ENCODE measurements at regions of chr12 and their contacts with region 1.

Region 1: GRCh38 chr12:113048716-113049127 is 7.8 kb upstream of the DTX1 start:
- DNase-seq: peak; percentile 84
- ATAC-seq: peak; percentile 55
- H3K4me3 ChIP-seq: no peak overlapping the region
- H3K4me3 Mint-ChIP-seq: peak overlapping the region; percentile 37
- H3K27ac ChIP-seq: peak overlapping the region; percentile 39 to 53
- H3K27ac Mint-ChIP-seq: peak overlapping the region; percentile 43
- H3K4me1 ChIP-seq: peaks cover 48 to 50% of the 10 kb centered on the region in 2 donors
- H3K4me1 Mint-ChIP-seq: peaks cover 47% of the 10 kb centered on the region
- H3K27me3 ChIP-seq: no peaks in the 10 kb centered on the region
- H3K27me3 Mint-ChIP-seq: peaks cover 5% of the 10 kb centered on the region
- CTCF ChIP-seq: peak; percentile 85

Region 2: GRCh38 chr12:112705037-112705661 is 343.6 kb before region 1 on chr12:
- CTCF ChIA-PET with region 1: no interaction called
- POLR2A ChIA-PET with region 1: no interaction called
- intact Hi-C with region 1: no loop called
- DNase-seq: no peak
- ATAC-seq: no peak
- H3K4me3 ChIP-seq: no peak overlapping the region
- H3K4me3 Mint-ChIP-seq: no peak overlapping the region
- H3K27ac ChIP-seq: no peak overlapping the region
- H3K27ac Mint-ChIP-seq: no peak overlapping the region
- H3K4me1 ChIP-seq: no peaks in the 10 kb centered on the region
- H3K4me1 Mint-ChIP-seq: no peaks in the 10 kb centered on the region
- H3K27me3 ChIP-seq: peaks cover 0 to 3% (median 1%) of the 10 kb centered on the region in 4 experiments
- H3K27me3 Mint-ChIP-seq: peaks cover 33% of the 10 kb centered on the region
- CTCF ChIP-seq: no peak

Region 3: GRCh38 chr12:112881602-112882001 is 167.1 kb before region 1 on chr12:
- CTCF ChIA-PET with region 1: no interaction called
- POLR2A ChIA-PET with region 1: no interaction called
- intact Hi-C with region 1: no loop called
- DNase-seq: no peak
- ATAC-seq: no peak
- H3K4me3 ChIP-seq: no peak overlapping the region
- H3K4me3 Mint-ChIP-seq: no peak overlapping the region
- H3K27ac ChIP-seq: no peak overlapping the region
- H3K27ac Mint-ChIP-seq: no peak overlapping the region
- H3K4me1 ChIP-seq: no peaks in the 10 kb centered on the region
- H3K4me1 Mint-ChIP-seq: no peaks in the 10 kb centered on the region
- H3K27me3 ChIP-seq: peaks cover 0 to 16% (median 8%) of the 10 kb centered on the region in 4 experiments
- H3K27me3 Mint-ChIP-seq: peaks cover 43% of the 10 kb centered on the region
- CTCF ChIP-seq: no peak

Region 4: DNA sequence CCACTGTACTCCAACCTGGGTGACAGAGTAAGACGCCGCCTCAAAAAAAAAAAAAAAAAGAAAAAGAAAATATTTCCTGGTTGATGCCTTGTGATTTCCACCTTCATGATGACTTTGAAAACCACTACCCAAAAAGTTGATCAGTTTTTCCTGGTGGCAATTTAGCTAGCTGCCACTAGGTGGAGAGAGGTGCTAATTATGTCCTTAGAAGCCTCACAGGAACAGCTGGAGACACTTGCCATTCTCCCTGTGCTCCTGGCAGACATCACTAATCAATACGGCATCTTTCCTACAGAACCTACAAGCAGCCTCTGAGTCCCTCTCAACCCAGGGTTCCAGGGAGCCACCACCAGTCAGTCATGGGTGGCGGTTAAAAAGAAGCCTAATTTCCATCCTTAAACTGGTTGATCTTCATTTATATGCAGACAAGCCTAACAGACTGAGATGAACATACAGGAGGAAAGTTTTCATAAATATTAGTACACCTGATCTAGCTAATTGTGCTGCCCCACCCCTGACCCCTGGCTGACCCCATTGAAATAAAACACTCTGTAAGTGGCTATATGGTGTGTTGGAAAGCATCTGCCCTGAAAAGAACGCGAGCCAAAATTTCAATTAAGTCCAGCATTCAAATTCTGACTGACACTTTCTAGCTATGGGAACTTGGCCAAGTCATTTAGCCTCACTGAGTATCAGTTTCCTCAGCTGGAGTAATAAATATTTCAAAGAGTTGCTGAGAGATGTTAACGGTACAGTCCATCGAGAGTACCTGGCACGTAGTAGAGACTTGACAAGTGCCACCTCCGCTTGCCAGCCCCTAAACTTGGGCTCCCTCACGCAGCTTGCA is 148.2 kb before region 1 on chr12:
- CTCF ChIA-PET with region 1: interaction called, 10 read pairs
- POLR2A ChIA-PET with region 1: no interaction called
- intact Hi-C with region 1: no loop called
- DNase-seq: peak; percentile 70
- ATAC-seq: no peak
- H3K4me3 ChIP-seq: no peak overlapping the region
- H3K4me3 Mint-ChIP-seq: no peak overlapping the region
- H3K27ac ChIP-seq: no peak overlapping the region
- H3K27ac Mint-ChIP-seq: peak overlapping the region; percentile 56
- H3K4me1 ChIP-seq: peaks cover 8 to 31% of the 10 kb centered on the region in 2 donors
- H3K4me1 Mint-ChIP-seq: peaks cover 38% of the 10 kb centered on the region
- H3K27me3 ChIP-seq: peaks cover 0 to 3% (median 0%) of the 10 kb centered on the region in 4 experiments
- H3K27me3 Mint-ChIP-seq: peaks cover 19% of the 10 kb centered on the region
- CTCF ChIP-seq: peak; percentile 85

Region 5: DNA sequence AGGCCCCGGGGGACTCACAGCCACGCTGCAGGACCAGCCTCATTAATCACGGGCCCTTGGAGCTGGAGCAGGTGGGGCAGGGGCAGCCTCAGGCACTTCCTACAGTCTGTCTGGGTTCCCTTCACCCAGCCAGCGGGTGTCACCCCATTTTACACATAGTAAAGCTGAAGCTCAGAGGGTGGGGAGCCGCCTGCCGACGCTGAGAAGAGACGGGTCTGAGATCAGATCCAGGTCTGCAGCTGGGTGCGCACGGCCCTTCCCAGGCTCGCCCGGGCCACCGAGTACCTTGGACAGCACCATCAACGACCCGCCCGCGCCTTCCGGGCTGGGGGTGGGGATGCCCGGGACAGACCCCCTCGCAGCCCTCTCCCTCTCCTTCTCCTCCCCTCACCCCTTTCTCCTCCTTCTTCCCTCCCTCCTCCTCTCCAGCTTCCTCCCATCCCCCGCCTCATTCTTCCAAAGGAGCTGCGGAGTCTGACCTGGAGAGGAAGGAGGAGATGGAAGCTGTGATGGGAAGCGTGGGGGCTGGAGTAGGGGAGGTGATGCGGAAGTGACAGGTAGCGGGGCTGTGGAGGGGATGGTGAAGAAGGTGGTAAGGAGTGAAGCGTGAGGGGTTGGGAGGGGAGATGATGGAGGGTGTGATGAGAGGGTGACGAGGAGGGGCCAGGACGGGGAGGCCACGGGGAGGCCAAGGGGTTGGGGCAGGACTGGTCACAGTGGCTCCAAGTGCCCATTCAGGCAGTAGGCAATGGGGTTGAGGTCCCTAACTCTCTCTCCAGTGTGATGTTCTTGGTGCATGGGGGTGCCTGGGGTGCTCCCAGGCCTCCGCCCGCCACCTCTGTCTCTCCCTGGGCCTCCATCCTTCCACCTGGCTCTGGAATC is 16.6 kb after region 1 on chr12:
- CTCF ChIA-PET with region 1: interaction called, 72 read pairs
- POLR2A ChIA-PET with region 1: interaction called, 7 read pairs
- intact Hi-C with region 1: no loop called
- DNase-seq: peak; percentile 68
- ATAC-seq: peak; percentile 32
- H3K4me3 ChIP-seq: peak overlapping the region in 2 of 5 experiments; percentile 7 to 13
- H3K4me3 Mint-ChIP-seq: peak overlapping the region; percentile 65
- H3K27ac ChIP-seq: peak overlapping the region; percentile 25 to 84
- H3K27ac Mint-ChIP-seq: peak overlapping the region; percentile 67
- H3K4me1 ChIP-seq: peaks cover 100% of the 10 kb centered on the region in 2 donors
- H3K4me1 Mint-ChIP-seq: peaks cover 80% of the 10 kb centered on the region
- H3K27me3 ChIP-seq: no peaks in the 10 kb centered on the region
- H3K27me3 Mint-ChIP-seq: no peaks in the 10 kb centered on the region
- CTCF ChIP-seq: no peak

Region 6: DNA sequence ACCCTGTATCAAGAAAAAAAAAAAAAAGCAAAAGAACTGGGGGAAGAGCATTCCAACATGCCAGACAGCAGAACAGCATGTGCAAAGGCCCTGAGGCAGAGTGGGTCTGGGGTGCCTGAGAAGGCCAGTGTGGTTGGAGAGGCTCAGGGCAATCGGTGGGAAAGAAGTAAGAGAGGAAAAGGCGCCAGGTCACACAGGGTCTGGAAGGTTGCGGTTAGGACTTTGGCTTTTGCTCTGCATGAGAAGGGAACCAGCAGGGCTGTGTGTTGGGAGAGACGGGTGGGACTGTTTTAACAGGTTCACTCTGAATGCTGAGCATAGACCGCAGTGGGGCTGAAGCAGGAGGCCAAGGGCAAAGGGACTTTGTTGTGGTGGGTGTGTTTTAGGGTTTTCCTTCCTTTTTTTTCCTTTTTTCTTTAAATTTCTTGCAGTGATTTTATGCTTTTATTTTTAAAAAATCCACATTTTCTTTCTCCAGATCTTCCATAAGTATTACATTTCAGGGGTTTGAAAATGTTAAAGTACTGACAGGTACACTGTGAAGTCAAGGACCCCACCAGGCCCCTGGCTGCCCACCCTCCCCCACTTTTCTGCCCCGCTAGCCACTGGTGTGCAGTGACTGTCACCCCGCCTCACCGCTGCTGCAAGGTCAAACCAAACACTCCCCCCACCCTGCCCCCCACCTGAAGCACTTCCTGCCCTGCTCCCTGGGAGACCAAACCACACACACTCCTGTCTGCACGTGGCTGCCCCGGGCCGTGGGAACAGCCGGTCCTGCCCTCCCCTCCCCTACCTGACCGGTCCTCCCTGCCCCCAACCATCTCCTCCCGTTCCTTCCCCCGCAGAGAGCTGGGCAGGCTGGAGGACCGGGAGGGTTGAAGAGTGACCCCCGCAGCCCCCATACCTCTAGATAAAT is 37.8 kb after region 1 on chr12:
- CTCF ChIA-PET with region 1: interaction called, 359 read pairs
- POLR2A ChIA-PET with region 1: interaction called, 7 read pairs
- intact Hi-C with region 1: no loop called
- DNase-seq: peak; percentile 58
- ATAC-seq: peak; percentile 21
- H3K4me3 ChIP-seq: peak overlapping the region in 3 of 5 experiments; percentile 5 to 20 (median 16)
- H3K4me3 Mint-ChIP-seq: peak overlapping the region; percentile 74
- H3K27ac ChIP-seq: peak overlapping the region; percentile 76 to 85
- H3K27ac Mint-ChIP-seq: peak overlapping the region; percentile 86
- H3K4me1 ChIP-seq: peaks cover 97 to 98% of the 10 kb centered on the region in 2 donors
- H3K4me1 Mint-ChIP-seq: peaks cover 85% of the 10 kb centered on the region
- H3K27me3 ChIP-seq: no peaks in the 10 kb centered on the region
- H3K27me3 Mint-ChIP-seq: no peaks in the 10 kb centered on the region
- CTCF ChIP-seq: no peak

Region 7: GRCh38 chr12:113098446-113098896 is 49.7 kb after region 1 on chr12:
- CTCF ChIA-PET with region 1: interaction called, 359 read pairs
- POLR2A ChIA-PET with region 1: interaction called, 4 read pairs
- intact Hi-C with region 1: loop called (anchors 1 kb)
- DNase-seq: peak; percentile 82
- ATAC-seq: peak; percentile 87
- H3K4me3 ChIP-seq: no peak overlapping the region
- H3K4me3 Mint-ChIP-seq: no peak overlapping the region
- H3K27ac ChIP-seq: peak overlapping the region in 1 of 2 donors; percentile 15
- H3K27ac Mint-ChIP-seq: peak overlapping the region; percentile 73
- H3K4me1 ChIP-seq: peaks cover 9 to 20% of the 10 kb centered on the region in 2 donors
- H3K4me1 Mint-ChIP-seq: peaks cover 18% of the 10 kb centered on the region
- H3K27me3 ChIP-seq: peaks cover 0 to under 1% (median 0%) of the 10 kb centered on the region in 4 experiments
- H3K27me3 Mint-ChIP-seq: no peaks in the 10 kb centered on the region
- CTCF ChIP-seq: peak; percentile 95

Region 8: GRCh38 chr12:113152835-113153814 is 104.4 kb after region 1 on chr12:
- CTCF ChIA-PET with region 1: interaction called, 61 read pairs
- POLR2A ChIA-PET with region 1: no interaction called
- intact Hi-C with region 1: loop called (anchors 1 kb)
- DNase-seq: peak; percentile 72
- ATAC-seq: peak; percentile 73
- H3K4me3 ChIP-seq: peak overlapping the region; percentile 34 to 61 (median 56)
- H3K4me3 Mint-ChIP-seq: peak overlapping the region; percentile 88
- H3K27ac ChIP-seq: no peak overlapping the region
- H3K27ac Mint-ChIP-seq: no peak overlapping the region
- H3K4me1 ChIP-seq: peaks cover 15 to 32% of the 10 kb centered on the region in 2 donors
- H3K4me1 Mint-ChIP-seq: peaks cover 26% of the 10 kb centered on the region
- H3K27me3 ChIP-seq: peaks cover 0 to 25% (median 8%) of the 10 kb centered on the region in 4 experiments
- H3K27me3 Mint-ChIP-seq: peaks cover 6% of the 10 kb centered on the region
- CTCF ChIP-seq: peak; percentile 23

Measured in B cell (primary cell).